Endothelial cell of umbilical vein (primary cell): ENCODE measurements at regions of chr11 and their contacts with region 1.

Region 1: GRCh38 chr11:30143098-30143705 is 87.6 kb upstream of the FSHB start:
- DNase-seq: peak; percentile 42
- H3K4me3 ChIP-seq: no peak overlapping the region
- H3K27ac ChIP-seq: no peak overlapping the region
- H3K4me1 ChIP-seq: no peaks in the 10 kb centered on the region
- H3K27me3 ChIP-seq: no peaks in the 10 kb centered on the region
- CTCF ChIP-seq: peak; percentile 50 to 67
- POLR2A ChIP-seq: no peak

Region 2: GRCh38 chr11:29343465-29344333 is 799.5 kb before region 1 on chr11:
- CTCF ChIA-PET with region 1: interaction called, 20 read pairs
- POLR2A ChIA-PET with region 1: no interaction called
- dilution Hi-C with region 1: no loop called
- intact Hi-C with region 1: loop called (anchors 1 kb)
- DNase-seq: peak; percentile 58
- H3K4me3 ChIP-seq: no peak overlapping the region
- H3K27ac ChIP-seq: no peak overlapping the region
- H3K4me1 ChIP-seq: no peaks in the 10 kb centered on the region
- H3K27me3 ChIP-seq: no peaks in the 10 kb centered on the region
- CTCF ChIP-seq: peak; percentile 88 to 94
- POLR2A ChIP-seq: no peak

Region 3: GRCh38 chr11:29448246-29448877 is 694.8 kb before region 1 on chr11:
- CTCF ChIA-PET with region 1: interaction called, 118 read pairs
- POLR2A ChIA-PET with region 1: no interaction called
- dilution Hi-C with region 1: no loop called
- intact Hi-C with region 1: loop called (anchors 1 kb)
- DNase-seq: peak; percentile 54
- H3K4me3 ChIP-seq: no peak overlapping the region
- H3K27ac ChIP-seq: no peak overlapping the region
- H3K4me1 ChIP-seq: peaks cover 24% of the 10 kb centered on the region
- H3K27me3 ChIP-seq: no peaks in the 10 kb centered on the region
- CTCF ChIP-seq: peak; percentile 28 to 56
- POLR2A ChIP-seq: no peak

Region 4: GRCh38 chr11:30128269-30128932 is 14.8 kb before region 1 on chr11:
- CTCF ChIA-PET with region 1: interaction called, 161 read pairs
- POLR2A ChIA-PET with region 1: no interaction called
- dilution Hi-C with region 1: no loop called
- intact Hi-C with region 1: no loop called
- DNase-seq: peak; percentile 31
- H3K4me3 ChIP-seq: no peak overlapping the region
- H3K27ac ChIP-seq: no peak overlapping the region
- H3K4me1 ChIP-seq: no peaks in the 10 kb centered on the region
- H3K27me3 ChIP-seq: no peaks in the 10 kb centered on the region
- CTCF ChIP-seq: peak; percentile 52 to 56
- POLR2A ChIP-seq: no peak

Region 5: GRCh38 chr11:30165652-30166051 is 22.4 kb after region 1 on chr11:
- CTCF ChIA-PET with region 1: interaction called, 38 read pairs
- POLR2A ChIA-PET with region 1: no interaction called
- dilution Hi-C with region 1: no loop called
- intact Hi-C with region 1: no loop called
- DNase-seq: no peak
- H3K4me3 ChIP-seq: no peak overlapping the region
- H3K27ac ChIP-seq: no peak overlapping the region
- H3K4me1 ChIP-seq: no peaks in the 10 kb centered on the region
- H3K27me3 ChIP-seq: no peaks in the 10 kb centered on the region
- CTCF ChIP-seq: no peak
- POLR2A ChIP-seq: no peak

Region 6: DNA sequence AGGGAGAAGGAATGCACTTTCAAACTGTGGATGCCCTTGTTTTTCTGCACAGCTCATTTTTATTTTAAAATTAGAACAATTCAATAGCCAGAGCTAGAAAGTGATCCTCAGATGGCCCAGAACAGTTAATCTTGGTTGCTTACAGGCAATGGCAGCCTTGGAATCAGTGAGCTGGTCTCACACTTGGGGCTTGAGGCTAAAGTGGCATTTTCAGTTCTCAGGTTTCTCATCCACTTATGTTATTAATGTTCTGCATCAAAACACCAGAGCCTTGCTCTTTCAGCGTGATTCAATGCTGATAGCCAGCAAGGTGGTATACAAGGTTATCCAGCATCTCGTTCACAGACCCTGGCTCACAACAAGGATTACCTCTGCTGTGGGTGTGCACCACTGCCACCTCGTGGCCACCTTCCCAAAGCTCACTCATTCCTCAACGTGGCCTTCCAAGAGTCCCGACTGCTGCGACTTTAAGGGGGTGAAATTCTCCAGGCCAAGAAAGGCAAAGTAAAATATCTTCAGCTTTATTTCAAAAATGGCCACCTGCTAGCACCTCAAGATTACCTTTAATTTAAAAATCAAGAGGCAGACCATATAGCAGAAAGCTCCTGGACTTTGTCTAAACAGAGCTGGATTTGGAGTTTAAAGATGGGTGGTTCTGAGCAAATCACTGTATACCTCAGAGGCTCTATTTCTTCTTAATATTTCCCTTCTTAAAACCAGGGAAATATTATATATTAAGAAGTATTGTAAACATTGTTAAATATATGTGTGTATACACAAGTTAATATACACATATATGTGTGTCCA is 53.4 kb after region 1 on chr11:
- CTCF ChIA-PET with region 1: interaction called, 35 read pairs
- POLR2A ChIA-PET with region 1: no interaction called
- dilution Hi-C with region 1: no loop called
- intact Hi-C with region 1: no loop called
- DNase-seq: peak; percentile 54
- H3K4me3 ChIP-seq: no peak overlapping the region
- H3K27ac ChIP-seq: no peak overlapping the region
- H3K4me1 ChIP-seq: no peaks in the 10 kb centered on the region
- H3K27me3 ChIP-seq: no peaks in the 10 kb centered on the region
- CTCF ChIP-seq: peak; percentile 71 to 82
- POLR2A ChIP-seq: no peak